Activated naive CD4-positive, alpha-beta T cell treated with anti-CD3 and anti-CD28 coated beads for 36 hours (primary cell): ENCODE measurements at regions of chr7 and their contacts with region 1.

Region 1: GRCh38 chr7:128209229-128210035 is 31.6 kb upstream of the LEP start:
- DNase-seq: peak; percentile 80
- H3K4me3 Mint-ChIP-seq: no peak overlapping the region
- H3K27ac Mint-ChIP-seq: no peak overlapping the region
- H3K4me1 Mint-ChIP-seq: no peaks in the 10 kb centered on the region
- H3K27me3 Mint-ChIP-seq: peaks cover 5% of the 10 kb centered on the region

Region 2: GRCh38 chr7:127347567-127348246 is 861.7 kb before region 1 on chr7:
- CTCF ChIA-PET with region 1: no interaction called
- intact Hi-C with region 1: loop called (anchors 5 kb)
- DNase-seq: peak; percentile 77
- H3K4me3 Mint-ChIP-seq: peak overlapping the region; percentile 36
- H3K27ac Mint-ChIP-seq: no peak overlapping the region
- H3K4me1 Mint-ChIP-seq: peaks cover 21% of the 10 kb centered on the region
- H3K27me3 Mint-ChIP-seq: no peaks in the 10 kb centered on the region

Region 3: GRCh38 chr7:127629268-127629854 is 580.1 kb before region 1 on chr7:
- CTCF ChIA-PET with region 1: interaction called, 10 read pairs
- intact Hi-C with region 1: no loop called
- DNase-seq: peak; percentile 48
- H3K4me3 Mint-ChIP-seq: no peak overlapping the region
- H3K27ac Mint-ChIP-seq: no peak overlapping the region
- H3K4me1 Mint-ChIP-seq: peaks cover 2% of the 10 kb centered on the region
- H3K27me3 Mint-ChIP-seq: peaks cover 5% of the 10 kb centered on the region

Region 4: DNA sequence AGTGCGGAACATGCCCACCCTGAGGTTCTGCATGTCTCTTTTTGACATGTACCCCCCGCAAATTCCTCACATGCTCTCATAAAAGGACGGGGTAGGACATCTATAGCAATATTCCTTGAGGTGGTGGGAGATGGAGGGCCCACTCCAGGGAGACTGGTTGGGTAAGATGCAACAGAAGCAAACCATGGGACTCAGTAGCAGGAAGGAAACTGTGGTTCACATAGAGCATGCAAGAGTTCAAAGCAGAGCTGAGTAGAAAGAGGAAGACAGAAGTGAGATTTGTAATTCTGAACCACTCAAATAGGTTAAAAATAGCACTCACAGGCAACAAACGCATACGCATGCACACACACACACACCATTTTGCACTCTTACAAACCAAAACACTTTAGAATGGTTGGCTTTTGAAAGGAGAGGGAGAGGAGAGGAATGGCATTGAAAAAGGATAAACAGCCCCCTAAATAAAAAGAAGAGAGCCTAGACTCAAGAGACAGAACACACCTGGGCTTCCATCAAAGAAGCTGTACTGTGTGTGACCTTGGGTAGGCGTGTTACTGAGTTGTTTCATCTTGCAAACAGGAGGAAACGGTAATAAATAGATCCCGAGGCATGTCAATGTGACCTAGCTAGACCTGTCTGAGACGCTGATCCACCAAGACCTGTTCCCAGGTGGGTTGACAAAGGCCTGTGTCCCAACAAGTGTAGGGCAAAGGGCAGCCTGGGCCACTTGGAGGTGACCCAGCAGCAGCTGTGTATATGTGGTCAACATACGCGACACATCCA is 100.6 kb before region 1 on chr7:
- CTCF ChIA-PET with region 1: interaction called, 10 read pairs
- intact Hi-C with region 1: no loop called
- DNase-seq: peak; percentile 45
- H3K4me3 Mint-ChIP-seq: no peak overlapping the region
- H3K27ac Mint-ChIP-seq: peak overlapping the region; percentile 62
- H3K4me1 Mint-ChIP-seq: peaks cover 66% of the 10 kb centered on the region
- H3K27me3 Mint-ChIP-seq: peaks cover under 1% of the 10 kb centered on the region

Region 5: DNA sequence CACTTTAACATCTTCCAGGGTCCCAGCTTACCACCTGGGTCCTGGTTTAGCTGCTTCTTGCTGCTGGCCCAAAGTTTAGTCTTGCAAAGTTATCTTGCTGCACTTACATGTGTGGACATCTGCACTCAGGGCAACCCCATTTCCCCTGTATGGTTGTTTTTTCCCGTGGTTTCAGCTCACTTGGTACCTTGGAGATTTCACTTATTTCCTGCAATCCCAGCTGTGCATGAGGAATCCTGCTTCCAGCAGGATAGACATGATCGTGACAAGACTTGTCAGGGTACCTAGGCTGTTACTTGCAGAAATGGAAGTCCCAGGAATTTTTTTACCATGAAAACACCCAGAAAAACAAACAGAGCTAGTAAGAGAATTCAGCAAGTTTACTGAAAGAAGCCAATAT is 64.2 kb before region 1 on chr7:
- CTCF ChIA-PET with region 1: interaction called, 94 read pairs
- intact Hi-C with region 1: no loop called
- DNase-seq: no peak
- H3K4me3 Mint-ChIP-seq: no peak overlapping the region
- H3K27ac Mint-ChIP-seq: no peak overlapping the region
- H3K4me1 Mint-ChIP-seq: no peaks in the 10 kb centered on the region
- H3K27me3 Mint-ChIP-seq: no peaks in the 10 kb centered on the region

Region 6: GRCh38 chr7:128190051-128190647 is 19.3 kb before region 1 on chr7:
- CTCF ChIA-PET with region 1: interaction called, 18 read pairs
- intact Hi-C with region 1: loop called (anchors 1 kb)
- DNase-seq: no peak
- H3K4me3 Mint-ChIP-seq: no peak overlapping the region
- H3K27ac Mint-ChIP-seq: no peak overlapping the region
- H3K4me1 Mint-ChIP-seq: peaks cover 10% of the 10 kb centered on the region
- H3K27me3 Mint-ChIP-seq: peaks cover 14% of the 10 kb centered on the region

Region 7: GRCh38 chr7:128437426-128438332 is 228.2 kb after region 1 on chr7:
- CTCF ChIA-PET with region 1: no interaction called
- intact Hi-C with region 1: no loop called
- DNase-seq: no peak
- H3K4me3 Mint-ChIP-seq: no peak overlapping the region
- H3K27ac Mint-ChIP-seq: no peak overlapping the region
- H3K4me1 Mint-ChIP-seq: no peaks in the 10 kb centered on the region
- H3K27me3 Mint-ChIP-seq: no peaks in the 10 kb centered on the region